ENCODE measurements at regions of chr1 and their contacts with region 1.

Region 1: GRCh38 chr1:59007820-59008598 is 224.2 kb upstream of the JUN start:
- DNase-seq: peak; percentile 64
- H3K4me3 Mint-ChIP-seq: no peak overlapping the region
- H3K27ac Mint-ChIP-seq: peak overlapping the region; percentile 59
- H3K4me1 Mint-ChIP-seq: peaks cover 43% of the 10 kb centered on the region
- H3K27me3 Mint-ChIP-seq: peaks cover 4% of the 10 kb centered on the region

Region 2: DNA sequence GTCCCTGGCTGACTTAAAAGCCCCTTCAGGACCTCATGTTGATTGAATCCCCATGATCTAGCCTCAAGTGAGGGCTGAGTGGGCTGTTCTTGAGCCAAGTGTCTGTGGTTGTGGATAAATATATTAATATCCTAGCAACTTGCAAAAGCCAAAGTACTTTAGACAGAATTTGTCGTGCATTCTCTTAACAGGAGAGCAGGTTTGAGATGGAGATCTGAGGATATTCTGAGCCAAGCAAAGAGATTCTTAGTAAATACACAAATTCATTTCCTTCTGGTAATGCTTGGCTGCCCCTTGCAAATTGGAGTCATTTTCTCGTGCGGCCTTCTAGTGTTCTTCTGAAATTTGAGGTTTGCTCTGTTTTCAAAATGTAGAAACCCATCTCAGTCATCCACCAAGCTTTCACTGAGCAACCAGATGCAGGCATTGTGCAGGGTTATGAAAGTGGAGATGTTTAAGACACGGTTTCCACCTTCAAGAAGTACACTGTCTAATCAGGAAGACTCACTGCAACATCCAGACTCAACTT is 18.0 kb after region 1 on chr1:
- CTCF ChIA-PET with region 1: no interaction called
- POLR2A ChIA-PET with region 1: no interaction called
- intact Hi-C with region 1: loop called (anchors 1 kb)
- DNase-seq: peak; percentile 30
- H3K4me3 Mint-ChIP-seq: no peak overlapping the region
- H3K27ac Mint-ChIP-seq: peak overlapping the region; percentile 86
- H3K4me1 Mint-ChIP-seq: peaks cover 22% of the 10 kb centered on the region
- H3K27me3 Mint-ChIP-seq: no peaks in the 10 kb centered on the region

Region 3: GRCh38 chr1:59249396-59250137 is 241.6 kb after region 1 on chr1:
- CTCF ChIA-PET with region 1: no interaction called
- POLR2A ChIA-PET with region 1: no interaction called
- intact Hi-C with region 1: no loop called
- DNase-seq: no peak
- H3K4me3 Mint-ChIP-seq: no peak overlapping the region
- H3K27ac Mint-ChIP-seq: no peak overlapping the region
- H3K4me1 Mint-ChIP-seq: no peaks in the 10 kb centered on the region
- H3K27me3 Mint-ChIP-seq: peaks cover 2% of the 10 kb centered on the region